IMR-90 (cell line): ENCODE measurements at regions of chr3 and their contacts with region 1.

Region 1: DNA sequence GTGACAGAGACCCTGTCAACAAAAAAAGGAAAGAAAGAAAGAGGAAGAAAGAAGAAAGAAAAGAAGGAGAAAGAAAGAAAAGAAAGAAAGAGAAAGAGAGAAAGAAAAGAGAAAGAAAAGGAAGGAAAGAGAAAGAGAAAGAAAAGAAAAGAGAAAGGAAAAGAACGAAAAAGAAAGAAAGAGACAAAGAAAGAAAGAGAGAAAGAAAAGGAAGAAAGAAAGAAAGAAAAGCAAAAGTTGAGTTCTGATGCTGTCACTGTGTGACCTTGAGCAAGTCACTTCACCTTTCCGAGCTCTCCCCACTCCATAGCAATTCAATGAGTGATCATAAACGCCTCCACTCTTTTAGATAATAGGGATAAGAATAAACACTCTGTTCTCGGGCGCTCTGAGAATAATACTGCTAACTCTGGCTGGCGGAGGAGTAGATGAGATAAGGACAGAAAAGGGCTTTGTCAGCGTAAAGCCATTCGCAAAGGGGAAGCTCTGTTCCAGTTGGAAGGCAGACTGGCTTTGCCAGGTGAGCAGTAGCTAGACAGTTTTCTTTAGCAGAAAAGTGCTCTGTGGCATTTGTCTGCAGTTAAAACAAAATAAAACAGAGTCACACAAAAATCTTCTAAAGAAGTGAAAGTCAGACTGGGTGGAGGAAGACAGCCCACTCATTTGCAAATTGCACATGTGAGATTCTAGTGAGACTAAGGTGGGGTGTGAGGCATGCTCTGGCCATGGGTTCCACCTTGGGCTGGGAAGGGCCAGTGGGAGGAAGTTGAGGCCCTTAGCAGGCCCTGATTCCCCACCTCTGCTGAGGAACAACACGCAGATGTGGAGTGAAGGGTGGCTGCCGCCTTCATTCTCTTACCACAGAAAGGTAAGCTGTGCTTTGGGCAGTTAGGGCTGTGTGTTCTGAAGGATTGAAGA is 9.6 kb upstream of the FLNB start:
- DNase-seq: peak; percentile 81
- ATAC-seq: peak; percentile 69
- H3K4me3 ChIP-seq: peak overlapping the region; percentile 1; the same call in 1 of the 2 replicates
- H3K27ac ChIP-seq: no peak overlapping the region
- H3K4me1 ChIP-seq: peaks cover 4% of the 10 kb centered on the region
- H3K27me3 ChIP-seq: no peaks in the 10 kb centered on the region
- CTCF ChIP-seq: no peak
- POLR2A ChIP-seq: no peak
- RAD21 ChIP-seq: no peak

Region 2: GRCh38 chr3:57983734-57984518 is 14.7 kb before region 1 on chr3:
- CTCF ChIA-PET with region 1: interaction called, 3 read pairs
- POLR2A ChIA-PET with region 1: interaction called, 14 read pairs
- dilution Hi-C with region 1: no loop called
- in situ Hi-C with region 1: no loop called
- intact Hi-C with region 1: no loop called
- DNase-seq: peak; percentile 95
- ATAC-seq: peak; percentile 90
- H3K4me3 ChIP-seq: no peak overlapping the region
- H3K27ac ChIP-seq: peak overlapping the region; percentile 65
- H3K4me1 ChIP-seq: peaks cover 14% of the 10 kb centered on the region
- H3K27me3 ChIP-seq: no peaks in the 10 kb centered on the region
- CTCF ChIP-seq: no peak
- POLR2A ChIP-seq: no peak
- RAD21 ChIP-seq: no peak

Region 3: DNA sequence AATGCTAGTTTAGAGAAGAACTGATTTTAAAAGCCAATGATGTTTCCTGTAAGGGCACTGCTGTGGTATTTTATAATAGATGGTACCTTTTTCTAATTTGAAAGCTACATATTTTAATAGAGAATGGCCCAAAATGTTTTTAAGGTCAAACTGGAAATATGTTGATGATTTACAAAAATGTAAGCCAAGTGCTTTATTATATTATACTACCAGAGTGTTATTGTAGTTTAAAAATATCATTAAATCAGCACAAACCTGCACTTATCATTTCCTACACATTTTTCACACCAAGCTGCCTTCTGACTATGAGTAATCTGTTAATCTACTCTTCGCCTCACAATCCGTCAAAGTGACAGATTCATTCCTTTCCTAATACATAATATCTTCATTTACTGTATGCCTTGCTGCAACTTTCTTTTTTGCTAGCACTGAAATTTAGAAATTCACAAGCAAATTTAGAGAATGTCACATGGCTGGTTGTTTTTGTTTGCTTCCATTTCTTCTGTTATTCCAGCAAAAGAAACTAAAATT is 794.4 kb after region 1 on chr3:
- CTCF ChIA-PET with region 1: no interaction called
- POLR2A ChIA-PET with region 1: no interaction called
- dilution Hi-C with region 1: no loop called
- in situ Hi-C with region 1: no loop called
- intact Hi-C with region 1: no loop called
- DNase-seq: no peak
- ATAC-seq: no peak
- H3K4me3 ChIP-seq: no peak overlapping the region
- H3K27ac ChIP-seq: no peak overlapping the region
- H3K4me1 ChIP-seq: no peaks in the 10 kb centered on the region
- H3K27me3 ChIP-seq: no peaks in the 10 kb centered on the region; the same call in 1 of the 2 replicates
- CTCF ChIP-seq: no peak
- POLR2A ChIP-seq: no peak
- RAD21 ChIP-seq: no peak